Activated CD8-positive, alpha-beta T cell treated with anti-CD3 and anti-CD28 coated beads, Interleukin-2, amount 10 ng/mL, durations not matched to agents 7 days and 5 days (primary cell): ENCODE measurements at regions of chr6 and their contacts with region 1.

Region 1: DNA sequence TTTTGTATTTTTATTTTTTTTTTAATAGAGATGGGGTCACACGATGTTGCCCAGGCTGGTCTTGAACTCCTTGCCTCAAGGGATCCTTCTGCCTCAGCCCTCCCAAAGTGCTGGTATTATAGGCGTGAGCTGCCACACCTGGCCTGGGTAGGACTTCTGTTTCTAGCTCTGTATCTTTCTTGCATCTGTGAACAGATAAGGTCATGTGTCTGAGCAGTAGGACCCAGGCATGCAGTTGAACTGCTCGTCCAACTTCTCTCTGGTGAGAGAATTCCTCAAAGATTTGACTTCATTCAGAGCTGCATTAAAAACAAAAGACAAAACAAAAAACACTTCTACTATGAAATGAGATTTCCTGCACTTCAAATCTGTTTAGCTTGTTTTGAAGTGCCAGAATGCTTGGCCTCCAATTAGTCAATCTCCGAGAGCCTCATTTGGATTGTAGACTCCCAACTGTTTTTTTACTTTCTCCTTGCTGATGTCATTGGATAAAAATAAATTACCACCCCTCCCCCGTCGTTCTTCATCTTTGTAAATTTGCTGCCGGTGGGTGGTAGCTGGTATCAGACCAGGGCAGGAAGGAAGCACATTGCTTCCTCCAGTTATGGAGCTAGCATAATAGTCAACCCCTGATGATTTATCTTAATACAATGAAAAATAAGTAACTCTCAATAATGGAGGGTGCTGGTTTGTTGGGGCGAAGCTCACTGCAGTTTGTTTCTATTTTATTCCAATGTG is 17.6 kb downstream of the CD109 start:
- DNase-seq: no peak
- ATAC-seq: no peak
- H3K4me3 Mint-ChIP-seq: no peak overlapping the region
- H3K27ac Mint-ChIP-seq: no peak overlapping the region
- H3K4me1 Mint-ChIP-seq: peaks cover 11% of the 10 kb centered on the region
- H3K27me3 Mint-ChIP-seq: no peaks in the 10 kb centered on the region

Region 2: DNA sequence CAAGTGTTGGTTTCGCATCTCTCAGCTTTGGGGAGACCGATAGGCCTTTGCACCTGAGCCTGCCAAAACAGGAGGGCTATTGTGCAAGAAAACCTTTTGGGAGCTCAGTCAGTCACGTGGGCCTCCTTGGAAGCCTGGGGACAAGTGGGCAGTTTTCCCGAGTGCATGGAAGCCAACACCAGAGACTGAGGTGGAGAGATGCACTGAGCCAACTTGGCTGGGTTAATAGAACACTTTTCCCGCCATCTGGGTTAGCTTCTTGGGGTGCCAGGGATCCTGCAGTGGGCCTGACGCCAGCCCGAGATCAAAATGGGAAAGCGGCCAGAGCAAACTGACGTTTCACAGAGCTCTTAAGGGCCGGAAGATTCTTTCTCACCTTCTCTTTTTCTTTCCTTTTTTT is 341.1 kb before region 1 on chr6:
- CTCF ChIA-PET with region 1: no interaction called
- POLR2A ChIA-PET with region 1: no interaction called
- DNase-seq: no peak
- ATAC-seq: no peak
- H3K4me3 Mint-ChIP-seq: no peak overlapping the region
- H3K27ac Mint-ChIP-seq: no peak overlapping the region
- H3K4me1 Mint-ChIP-seq: no peaks in the 10 kb centered on the region
- H3K27me3 Mint-ChIP-seq: peaks cover 6% of the 10 kb centered on the region

Region 3: GRCh38 chr6:73653571-73654424 is 59.8 kb before region 1 on chr6 and contains the start of gene SLC17A5:
- CTCF ChIA-PET with region 1: interaction called, 11 read pairs
- POLR2A ChIA-PET with region 1: no interaction called
- DNase-seq: peak; percentile 93
- ATAC-seq: peak; percentile 91
- H3K4me3 Mint-ChIP-seq: peak within 1 kb of the TSS; percentile 99
- H3K27ac Mint-ChIP-seq: peak within 1 kb of the TSS; percentile 97
- H3K4me1 Mint-ChIP-seq: peaks cover 22% of the 10 kb centered on the region
- H3K27me3 Mint-ChIP-seq: no peaks in the 10 kb centered on the region
- total RNA-seq, gene SLC17A5: 5.0 to 5.7 TPM

Region 4: GRCh38 chr6:73747289-73747688 is 33.7 kb after region 1 on chr6:
- CTCF ChIA-PET with region 1: no interaction called
- POLR2A ChIA-PET with region 1: no interaction called
- DNase-seq: no peak
- ATAC-seq: peak; percentile 88
- H3K4me3 Mint-ChIP-seq: no peak overlapping the region
- H3K27ac Mint-ChIP-seq: no peak overlapping the region
- H3K4me1 Mint-ChIP-seq: no peaks in the 10 kb centered on the region
- H3K27me3 Mint-ChIP-seq: peaks cover 4% of the 10 kb centered on the region

Region 5: GRCh38 chr6:73768558-73768957 is 55.0 kb after region 1 on chr6:
- CTCF ChIA-PET with region 1: no interaction called
- POLR2A ChIA-PET with region 1: no interaction called
- DNase-seq: no peak
- ATAC-seq: no peak
- H3K4me3 Mint-ChIP-seq: no peak overlapping the region
- H3K27ac Mint-ChIP-seq: no peak overlapping the region
- H3K4me1 Mint-ChIP-seq: peaks cover 8% of the 10 kb centered on the region
- H3K27me3 Mint-ChIP-seq: no peaks in the 10 kb centered on the region

Region 6: GRCh38 chr6:73796881-73797280 is 83.3 kb after region 1 on chr6:
- CTCF ChIA-PET with region 1: no interaction called
- POLR2A ChIA-PET with region 1: no interaction called
- DNase-seq: no peak
- ATAC-seq: no peak
- H3K4me3 Mint-ChIP-seq: no peak overlapping the region
- H3K27ac Mint-ChIP-seq: no peak overlapping the region
- H3K4me1 Mint-ChIP-seq: no peaks in the 10 kb centered on the region
- H3K27me3 Mint-ChIP-seq: no peaks in the 10 kb centered on the region